ENCODE measurements at regions of chr15 and their contacts with region 1.

Region 1: GRCh38 chr15:42495361-42496212 is at the start of gene SNAP23:
- DNase-seq: peak; percentile 84
- ATAC-seq: peak; percentile 83
- H3K4me3 ChIP-seq: peak within 1 kb of the TSS; percentile 72 to 96 (median 95)
- H3K4me3 Mint-ChIP-seq: peak within 1 kb of the TSS; percentile 96
- H3K27ac ChIP-seq: peak within 1 kb of the TSS; percentile 64 to 71
- H3K27ac Mint-ChIP-seq: peak within 1 kb of the TSS; percentile 91
- H3K4me1 ChIP-seq: peaks cover 62 to 74% of the 10 kb centered on the region in 2 donors
- H3K4me1 Mint-ChIP-seq: peaks cover 84% of the 10 kb centered on the region
- H3K27me3 ChIP-seq: no peaks in the 10 kb centered on the region
- H3K27me3 Mint-ChIP-seq: no peaks in the 10 kb centered on the region
- CTCF ChIP-seq: no peak
- total RNA-seq, gene SNAP23: 133 and 140 TPM in 2 replicates

Region 2: GRCh38 chr15:42207674-42208579 is 287.7 kb before region 1 on chr15 and contains the start of gene VPS39:
- CTCF ChIA-PET with region 1: no interaction called
- POLR2A ChIA-PET with region 1: interaction called, 3 read pairs
- intact Hi-C with region 1: loop called (anchors 1 kb)
- DNase-seq: peak; percentile 86
- ATAC-seq: peak; percentile 97
- H3K4me3 ChIP-seq: peak within 1 kb of the TSS; percentile 83 to 97 (median 92)
- H3K4me3 Mint-ChIP-seq: peak within 1 kb of the TSS; percentile 85
- H3K27ac ChIP-seq: peak within 1 kb of the TSS; percentile 59 to 91
- H3K27ac Mint-ChIP-seq: peak within 1 kb of the TSS; percentile 91
- H3K4me1 ChIP-seq: peaks cover 20 to 22% of the 10 kb centered on the region in 2 donors
- H3K4me1 Mint-ChIP-seq: peaks cover 36% of the 10 kb centered on the region
- H3K27me3 ChIP-seq: no peaks in the 10 kb centered on the region
- H3K27me3 Mint-ChIP-seq: no peaks in the 10 kb centered on the region
- CTCF ChIP-seq: no peak
- total RNA-seq, gene VPS39: 145 and 149 TPM in 2 replicates

Region 3: DNA sequence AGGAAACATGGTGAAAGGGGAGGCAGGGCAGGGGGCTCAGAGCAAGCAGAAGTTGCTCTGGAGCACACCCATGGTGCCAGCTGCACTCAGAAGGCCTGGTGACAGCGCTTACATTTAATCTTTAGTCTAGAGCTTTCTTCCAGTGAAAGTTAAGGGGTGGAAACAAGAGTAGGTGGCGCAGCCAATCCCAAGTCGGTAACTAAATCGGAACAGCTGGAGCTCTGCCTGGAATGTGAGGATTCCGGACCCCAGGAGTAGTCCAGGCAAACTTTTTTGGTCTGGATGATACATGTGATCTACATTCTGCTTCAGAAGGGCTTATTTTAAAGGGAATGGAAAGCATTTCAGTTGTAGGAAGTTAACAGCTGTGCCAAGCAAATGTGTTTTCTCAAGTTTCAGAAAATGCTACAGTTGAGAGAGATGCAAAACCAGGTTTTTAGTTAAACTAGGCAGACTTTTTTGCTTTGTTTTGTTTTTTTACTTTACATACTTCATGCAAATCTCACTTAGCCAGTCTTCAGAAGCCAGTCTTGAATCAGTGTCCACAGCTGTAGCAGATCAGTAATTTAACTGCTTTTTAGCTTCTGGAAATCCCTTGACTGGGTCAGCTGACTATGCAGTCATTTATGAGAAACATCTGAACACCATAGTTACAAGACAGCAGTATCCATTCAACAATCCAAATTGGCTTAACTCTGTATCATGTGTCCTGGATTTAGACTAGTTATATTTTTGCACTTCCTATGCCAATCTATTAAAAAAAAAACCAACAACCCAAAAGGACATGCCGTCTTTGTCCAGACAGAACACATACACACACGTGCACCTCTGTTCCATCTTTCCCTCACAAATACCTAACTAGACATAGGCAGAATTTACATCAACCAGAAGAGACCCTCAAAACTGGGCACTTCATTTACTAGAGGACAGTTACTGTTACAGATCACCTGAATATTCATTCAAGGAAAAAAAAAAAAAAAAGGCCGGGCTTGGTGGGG is 37.8 kb before region 1 on chr15:
- CTCF ChIA-PET with region 1: no interaction called
- POLR2A ChIA-PET with region 1: no interaction called
- intact Hi-C with region 1: no loop called
- DNase-seq: peak; percentile 68
- ATAC-seq: peak; percentile 43
- H3K4me3 ChIP-seq: no peak overlapping the region
- H3K4me3 Mint-ChIP-seq: peak overlapping the region; percentile 11
- H3K27ac ChIP-seq: peak overlapping the region; percentile 54 to 77
- H3K27ac Mint-ChIP-seq: peak overlapping the region; percentile 77
- H3K4me1 ChIP-seq: peaks cover 6 to 20% of the 10 kb centered on the region in 2 donors
- H3K4me1 Mint-ChIP-seq: peaks cover 24% of the 10 kb centered on the region
- H3K27me3 ChIP-seq: no peaks in the 10 kb centered on the region
- H3K27me3 Mint-ChIP-seq: no peaks in the 10 kb centered on the region
- CTCF ChIP-seq: no peak

Region 4: GRCh38 chr15:42474827-42475226 is 20.8 kb before region 1 on chr15:
- CTCF ChIA-PET with region 1: interaction called, 3 read pairs
- POLR2A ChIA-PET with region 1: no interaction called
- intact Hi-C with region 1: loop called (anchors 1 kb)
- DNase-seq: no peak
- ATAC-seq: no peak
- H3K4me3 ChIP-seq: no peak overlapping the region
- H3K4me3 Mint-ChIP-seq: no peak overlapping the region
- H3K27ac ChIP-seq: no peak overlapping the region
- H3K27ac Mint-ChIP-seq: peak overlapping the region; percentile 38
- H3K4me1 ChIP-seq: peaks cover 0 to 4% of the 10 kb centered on the region in 2 donors
- H3K4me1 Mint-ChIP-seq: peaks cover 36% of the 10 kb centered on the region
- H3K27me3 ChIP-seq: no peaks in the 10 kb centered on the region
- H3K27me3 Mint-ChIP-seq: no peaks in the 10 kb centered on the region
- CTCF ChIP-seq: no peak

Region 5: GRCh38 chr15:42548253-42549031 is 52.9 kb after region 1 on chr15 and contains the starts of genes HAUS2 and LRRC57:
- CTCF ChIA-PET with region 1: interaction called, 3 read pairs
- POLR2A ChIA-PET with region 1: interaction called, 4 read pairs
- intact Hi-C with region 1: loop called (anchors 1 kb)
- DNase-seq: peak; percentile 91
- ATAC-seq: peak; percentile 86
- H3K4me3 ChIP-seq: peak within 1 kb of the TSS; percentile 99 to 100 (median 99)
- H3K4me3 Mint-ChIP-seq: peak within 1 kb of the TSS; percentile 96
- H3K27ac ChIP-seq: peak within 1 kb of the TSS; percentile 86 to 92
- H3K27ac Mint-ChIP-seq: peak within 1 kb of the TSS; percentile 93
- H3K4me1 ChIP-seq: peaks cover 20 to 26% of the 10 kb centered on the region in 2 donors
- H3K4me1 Mint-ChIP-seq: peaks cover 40% of the 10 kb centered on the region
- H3K27me3 ChIP-seq: no peaks in the 10 kb centered on the region
- H3K27me3 Mint-ChIP-seq: no peaks in the 10 kb centered on the region
- CTCF ChIP-seq: no peak
- total RNA-seq, gene HAUS2: 14.0 and 16.5 TPM in 2 replicates
- total RNA-seq, gene LRRC57: 17.8 and 25.4 TPM in 2 replicates

Region 6: DNA sequence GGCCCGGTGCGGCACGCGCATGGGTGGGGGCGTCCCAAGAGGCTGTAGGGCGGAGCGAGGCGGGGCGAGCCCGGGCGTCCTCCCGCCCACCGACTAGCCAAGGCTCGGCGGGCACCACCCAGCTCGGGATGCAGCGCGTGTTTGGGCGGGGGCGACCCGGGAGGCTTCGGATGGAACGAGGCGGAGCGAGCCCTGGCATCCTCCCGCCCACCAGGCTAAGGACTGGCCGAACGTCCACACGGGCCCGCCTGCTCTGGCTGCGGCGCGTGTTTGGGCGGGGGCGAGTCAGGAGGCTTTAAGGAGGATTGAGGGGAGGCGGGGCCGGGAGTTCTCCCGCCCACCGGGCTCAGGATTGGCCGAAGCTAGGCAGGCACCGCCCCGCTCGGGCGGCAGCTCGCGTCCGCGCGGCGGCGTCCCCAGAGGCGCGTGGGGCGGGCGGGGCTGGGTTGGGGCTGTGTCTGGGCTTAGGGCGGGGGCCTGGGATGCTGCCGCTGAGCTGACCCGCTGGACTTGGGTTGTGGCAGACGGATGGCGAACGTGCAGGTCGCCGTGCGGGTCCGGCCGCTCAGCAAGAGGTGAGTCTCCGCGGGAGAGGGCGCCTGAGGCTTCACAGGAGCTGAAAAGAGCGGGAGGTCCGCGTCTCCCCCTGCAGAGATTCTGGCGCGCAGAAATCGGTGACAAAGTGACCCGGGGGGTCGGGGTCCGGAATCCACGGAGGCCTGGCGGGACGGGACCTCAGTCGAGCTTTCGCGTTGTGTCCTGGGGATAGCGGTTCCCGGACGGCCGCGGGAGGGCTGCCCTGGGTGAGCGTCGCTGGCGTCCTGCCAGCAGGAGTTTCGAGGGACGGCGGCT is 79.8 kb after region 1 on chr15 and contains the start of gene STARD9:
- CTCF ChIA-PET with region 1: no interaction called
- POLR2A ChIA-PET with region 1: interaction called, 10 read pairs
- intact Hi-C with region 1: loop called (anchors 1 kb)
- DNase-seq: peak; percentile 98
- ATAC-seq: peak; percentile 88
- H3K4me3 ChIP-seq: peak within 1 kb of the TSS; percentile 61 to 93 (median 88)
- H3K4me3 Mint-ChIP-seq: peak within 1 kb of the TSS; percentile 96
- H3K27ac ChIP-seq: peak within 1 kb of the TSS; percentile 67 to 69
- H3K27ac Mint-ChIP-seq: peak within 1 kb of the TSS; percentile 89
- H3K4me1 ChIP-seq: peaks cover 14 to 15% of the 10 kb centered on the region in 2 donors
- H3K4me1 Mint-ChIP-seq: peaks cover 19% of the 10 kb centered on the region
- H3K27me3 ChIP-seq: peaks cover 0 to 4% (median 0%) of the 10 kb centered on the region in 4 experiments
- H3K27me3 Mint-ChIP-seq: peaks cover 9% of the 10 kb centered on the region
- CTCF ChIP-seq: no peak
- total RNA-seq, gene STARD9: 20.8 and 23.1 TPM in 2 replicates

Region 7: GRCh38 chr15:42920519-42921227 is 425.1 kb after region 1 on chr15 and contains the start of gene TTBK2:
- CTCF ChIA-PET with region 1: no interaction called
- POLR2A ChIA-PET with region 1: no interaction called
- intact Hi-C with region 1: loop called (anchors 2 kb)
- DNase-seq: peak; percentile 99
- ATAC-seq: peak; percentile 95
- H3K4me3 ChIP-seq: peak within 1 kb of the TSS; percentile 67 to 94 (median 73)
- H3K4me3 Mint-ChIP-seq: peak within 1 kb of the TSS; percentile 90
- H3K27ac ChIP-seq: peak within 1 kb of the TSS; percentile 41 to 46
- H3K27ac Mint-ChIP-seq: peak within 1 kb of the TSS; percentile 92
- H3K4me1 ChIP-seq: peaks cover 12 to 23% of the 10 kb centered on the region in 2 donors
- H3K4me1 Mint-ChIP-seq: peaks cover 34% of the 10 kb centered on the region
- H3K27me3 ChIP-seq: no peaks in the 10 kb centered on the region
- H3K27me3 Mint-ChIP-seq: no peaks in the 10 kb centered on the region
- CTCF ChIP-seq: peak; percentile 16
- total RNA-seq, gene TTBK2: 38.7 and 39.6 TPM in 2 replicates

Measured in B cell (primary cell).